ENCODE measurements at regions of chr11 and their contacts with region 1.

Region 1: GRCh38 chr11:8006349-8006977 is 19.3 kb downstream of the EIF3F start:
- DNase-seq: peak; percentile 75
- ATAC-seq: peak; percentile 96
- H3K4me3 Mint-ChIP-seq: no peak overlapping the region
- H3K27ac Mint-ChIP-seq: no peak overlapping the region
- H3K4me1 Mint-ChIP-seq: no peaks in the 10 kb centered on the region
- H3K27me3 Mint-ChIP-seq: no peaks in the 10 kb centered on the region; the same call in 1 of the 2 replicates
- CTCF ChIP-seq: peak; percentile 71

Region 2: DNA sequence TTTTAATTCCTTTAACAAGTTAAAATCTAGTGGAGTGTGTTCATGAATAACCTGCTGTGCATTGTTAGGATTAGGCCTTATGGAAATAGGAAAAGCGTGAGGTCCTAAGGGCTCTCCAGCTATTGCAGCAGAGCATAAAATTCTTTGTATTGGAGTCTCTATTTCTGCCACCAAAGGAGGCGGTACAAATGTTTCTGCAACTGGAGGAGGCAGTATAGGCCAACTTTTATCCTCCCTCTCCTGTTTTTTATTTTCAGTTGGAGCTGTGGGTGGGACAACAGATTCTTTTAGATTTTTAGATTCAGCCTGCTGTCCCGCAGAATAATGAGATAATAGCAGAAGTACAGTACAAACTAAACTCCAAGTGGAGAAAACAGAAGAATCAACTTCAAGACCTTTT is 101.5 kb before region 1 on chr11:
- CTCF ChIA-PET with region 1: interaction called, 10 read pairs
- POLR2A ChIA-PET with region 1: no interaction called
- DNase-seq: no peak
- ATAC-seq: no peak
- H3K4me3 Mint-ChIP-seq: 0 out of 2 replicates have a peak overlapping the region, but pooled peaks have one; percentile 3
- H3K27ac Mint-ChIP-seq: no peak overlapping the region
- H3K4me1 Mint-ChIP-seq: peaks cover 69% of the 10 kb centered on the region
- H3K27me3 Mint-ChIP-seq: no peaks in the 10 kb centered on the region
- CTCF ChIP-seq: no peak

Region 3: DNA sequence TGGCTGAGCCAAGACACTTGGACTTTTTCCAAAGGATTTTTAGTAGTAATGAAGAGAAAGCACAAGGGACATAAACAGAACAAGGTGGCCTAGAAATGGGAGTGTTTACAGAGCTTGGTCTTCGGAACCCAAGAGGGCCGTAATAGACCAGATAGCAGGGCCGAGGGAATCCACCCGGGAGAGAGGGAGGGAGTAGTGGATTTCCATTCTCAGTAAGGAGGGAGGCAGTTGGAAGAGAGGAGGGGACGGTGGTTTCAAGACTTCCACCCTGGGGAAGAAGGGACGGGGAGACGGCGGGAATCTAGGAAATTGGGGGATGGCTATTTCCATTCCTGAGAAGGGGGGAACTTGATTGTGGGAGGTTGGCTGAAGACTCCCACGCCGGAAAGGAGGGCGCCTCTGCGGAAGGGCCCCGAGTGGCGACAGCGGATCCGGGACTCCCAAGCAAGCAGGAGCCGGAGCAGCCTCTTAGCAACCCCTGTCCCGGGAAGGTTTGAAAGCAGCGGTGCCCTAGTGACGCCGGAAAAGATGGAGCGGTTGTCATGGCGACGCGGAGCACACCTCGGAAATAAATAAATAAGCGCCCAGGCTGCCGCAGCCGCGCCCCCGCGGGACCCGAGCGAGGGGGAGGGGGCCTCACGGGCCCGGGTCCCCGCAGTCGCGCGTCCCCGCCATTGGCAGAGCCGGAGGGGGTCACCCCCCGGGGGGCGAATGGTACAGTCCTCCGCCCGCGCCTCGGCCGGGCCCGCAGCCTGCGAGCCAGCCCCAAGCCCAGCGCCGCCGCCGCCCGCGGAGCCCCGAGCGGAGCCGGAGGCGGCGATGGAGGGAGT is 12.2 kb after region 1 on chr11:
- CTCF ChIA-PET with region 1: interaction called, 47 read pairs
- POLR2A ChIA-PET with region 1: no interaction called
- DNase-seq: peak; percentile 74
- ATAC-seq: peak; percentile 59
- H3K4me3 Mint-ChIP-seq: peak overlapping the region; percentile 75
- H3K27ac Mint-ChIP-seq: no peak overlapping the region
- H3K4me1 Mint-ChIP-seq: peaks cover 32% of the 10 kb centered on the region
- H3K27me3 Mint-ChIP-seq: peaks cover 81% of the 10 kb centered on the region
- CTCF ChIP-seq: no peak

Region 4: GRCh38 chr11:8056810-8057463 is 50.5 kb after region 1 on chr11:
- CTCF ChIA-PET with region 1: interaction called, 32 read pairs
- POLR2A ChIA-PET with region 1: no interaction called
- DNase-seq: no peak
- ATAC-seq: no peak
- H3K4me3 Mint-ChIP-seq: no peak overlapping the region
- H3K27ac Mint-ChIP-seq: peak overlapping the region; percentile 37; the same call in 1 of the 2 replicates
- H3K4me1 Mint-ChIP-seq: peaks cover 14% of the 10 kb centered on the region
- H3K27me3 Mint-ChIP-seq: no peaks in the 10 kb centered on the region
- CTCF ChIP-seq: no peak

Region 5: GRCh38 chr11:8080674-8081590 is 74.5 kb after region 1 on chr11 and contains the start of gene TUB:
- CTCF ChIA-PET with region 1: interaction called, 257 read pairs
- POLR2A ChIA-PET with region 1: no interaction called
- DNase-seq: peak; percentile 70
- ATAC-seq: peak; percentile 44
- H3K4me3 Mint-ChIP-seq: peak within 1 kb of the TSS; percentile 79
- H3K27ac Mint-ChIP-seq: no peak within 1 kb of the TSS
- H3K4me1 Mint-ChIP-seq: peaks cover 48% of the 10 kb centered on the region
- H3K27me3 Mint-ChIP-seq: peaks cover 42% of the 10 kb centered on the region
- CTCF ChIP-seq: no peak
- total RNA-seq, gene TUB: 29.2 to 32.1 TPM (median 30.0 TPM) in 3 replicates

Measured in WTC11 (cell line).